HCT116 (cell line): ENCODE measurements at regions of chr19 and their contacts with region 1.

Region 1: DNA sequence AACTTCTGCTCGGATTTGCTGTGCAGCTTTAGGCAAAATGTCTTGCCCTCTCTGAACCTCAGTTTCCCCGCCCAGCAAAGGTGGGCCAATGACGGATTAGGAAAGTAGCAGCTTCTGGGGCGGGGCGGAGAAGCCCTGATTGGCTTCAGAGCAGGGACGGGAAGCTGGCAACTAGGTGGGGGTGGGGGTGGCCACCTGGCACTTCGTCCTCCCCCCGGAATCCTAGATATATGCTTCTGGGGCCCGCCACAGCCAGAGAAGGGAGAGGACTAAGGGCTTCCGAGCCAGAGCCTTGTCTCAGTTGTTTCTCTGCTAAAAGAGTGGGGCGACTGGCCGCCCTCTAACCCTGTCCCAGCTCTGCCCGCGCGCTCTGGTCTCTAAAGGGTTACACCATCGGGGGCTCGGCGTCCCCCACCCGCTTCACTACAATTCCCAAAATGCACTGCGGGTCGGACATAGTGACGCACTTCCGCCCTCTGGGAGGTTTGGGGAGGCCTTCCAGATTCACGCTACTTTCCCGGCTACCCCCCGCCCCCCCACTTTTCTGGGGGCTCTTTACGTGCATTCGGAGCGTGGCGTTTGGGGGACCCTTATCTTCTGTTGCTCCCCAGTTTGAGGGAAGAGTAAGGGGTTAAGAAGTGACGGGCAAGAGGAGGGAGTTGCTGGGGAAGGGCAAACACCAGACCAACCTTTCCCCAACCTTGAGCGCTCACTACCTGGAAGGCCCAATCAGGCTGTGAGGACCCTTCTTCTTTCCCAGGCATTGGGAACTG is 672 bp upstream of the IRF2BP1 start:
- DNase-seq: peak; percentile 90
- ATAC-seq: peak; percentile 69
- H3K4me3 ChIP-seq: peak overlapping the region; percentile 71 to 75
- H3K27ac ChIP-seq: peak overlapping the region; percentile 91
- H3K4me1 ChIP-seq: peaks cover 18 to 39% of the 10 kb centered on the region in 2 experiments
- H3K27me3 ChIP-seq: no peaks in the 10 kb centered on the region
- CTCF ChIP-seq: no peak
- POLR2A ChIP-seq: no peak
- RAD21 ChIP-seq: no peak

Region 2: DNA sequence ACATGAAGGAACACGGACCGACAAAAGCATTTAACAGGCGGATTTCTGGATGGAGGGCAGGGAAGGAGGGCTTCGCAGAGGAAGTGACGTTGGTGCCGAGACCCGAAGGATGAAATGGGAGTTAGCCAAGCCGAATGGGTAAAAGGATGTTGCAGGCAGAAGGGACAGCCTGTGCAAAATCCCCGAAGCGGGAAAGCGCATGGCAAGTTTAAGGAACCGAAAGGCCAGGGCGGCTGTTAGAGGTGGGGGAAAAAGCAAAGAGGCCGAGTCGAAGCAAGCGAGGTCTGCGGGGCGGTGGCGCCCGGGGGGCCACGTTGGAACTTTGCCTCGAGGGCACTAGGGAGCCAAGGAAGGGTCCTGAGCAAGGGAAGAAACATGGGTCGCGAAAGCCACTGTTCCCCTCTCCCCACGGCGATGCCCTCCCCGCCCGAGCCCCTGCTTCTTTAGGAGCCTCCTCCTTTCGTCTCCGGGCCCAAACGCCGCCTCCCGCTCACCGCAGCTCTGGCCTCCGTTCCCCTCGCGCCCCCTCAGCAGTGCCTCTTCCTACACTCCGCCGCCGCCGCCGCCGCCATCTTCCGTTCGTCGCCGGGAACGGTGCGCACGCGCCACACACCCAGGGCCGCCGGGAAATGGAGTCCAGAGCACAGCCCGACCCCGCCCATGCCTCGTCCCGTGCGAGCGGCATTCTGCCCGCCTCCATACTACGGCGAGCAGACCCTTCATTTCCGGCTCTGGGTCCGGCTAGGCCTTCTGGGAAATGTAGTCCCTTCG is 23.9 kb before region 1 on chr19 and contains the start of gene SYMPK:
- CTCF ChIA-PET with region 1: interaction called, 45 read pairs
- POLR2A ChIA-PET with region 1: interaction called, 24 read pairs
- RAD21 ChIA-PET with region 1: interaction called, 4 to 6 read pairs
- intact Hi-C with region 1: loop called (anchors 1 kb)
- DNase-seq: peak; percentile 96
- ATAC-seq: peak; percentile 91
- H3K4me3 ChIP-seq: peak within 1 kb of the TSS; percentile 91 to 93
- H3K27ac ChIP-seq: peak within 1 kb of the TSS; percentile 91
- H3K4me1 ChIP-seq: peaks cover 11 to 35% of the 10 kb centered on the region in 2 experiments
- H3K27me3 ChIP-seq: no peaks in the 10 kb centered on the region
- CTCF ChIP-seq: no peak
- POLR2A ChIP-seq: peak; percentile 52
- RAD21 ChIP-seq: no peak
- total RNA-seq, gene SYMPK: 117 TPM

Region 3: GRCh38 chr19:45902651-45903625 is 16.3 kb after region 1 on chr19:
- CTCF ChIA-PET with region 1: interaction called, 6 read pairs
- POLR2A ChIA-PET with region 1: interaction called, 5 read pairs
- RAD21 ChIA-PET with region 1: interaction called in 1 of 2 experiments, 3 read pairs
- intact Hi-C with region 1: loop called (anchors 2 kb)
- DNase-seq: peak; percentile 92
- ATAC-seq: peak; percentile 92
- H3K4me3 ChIP-seq: peak overlapping the region; percentile 75 to 86
- H3K27ac ChIP-seq: peak overlapping the region; percentile 72
- H3K4me1 ChIP-seq: peaks cover 0 to 10% of the 10 kb centered on the region in 2 experiments; a peak in 1 of 4 replicates
- H3K27me3 ChIP-seq: no peaks in the 10 kb centered on the region
- CTCF ChIP-seq: no peak
- POLR2A ChIP-seq: peak; percentile 61
- RAD21 ChIP-seq: no peak